HCT116 (cell line): ENCODE measurements at regions of chr2 and their contacts with region 1.

Region 1: GRCh38 chr2:56860991-56861390 is 677.2 kb downstream of the CCDC85A start:
- DNase-seq: no peak
- ATAC-seq: no peak
- H3K4me3 ChIP-seq: no peak overlapping the region
- H3K27ac ChIP-seq: no peak overlapping the region
- H3K4me1 ChIP-seq: no peaks in the 10 kb centered on the region
- H3K27me3 ChIP-seq: no peaks in the 10 kb centered on the region
- CTCF ChIP-seq: no peak
- POLR2A ChIP-seq: no peak
- RAD21 ChIP-seq: no peak

Region 2: DNA sequence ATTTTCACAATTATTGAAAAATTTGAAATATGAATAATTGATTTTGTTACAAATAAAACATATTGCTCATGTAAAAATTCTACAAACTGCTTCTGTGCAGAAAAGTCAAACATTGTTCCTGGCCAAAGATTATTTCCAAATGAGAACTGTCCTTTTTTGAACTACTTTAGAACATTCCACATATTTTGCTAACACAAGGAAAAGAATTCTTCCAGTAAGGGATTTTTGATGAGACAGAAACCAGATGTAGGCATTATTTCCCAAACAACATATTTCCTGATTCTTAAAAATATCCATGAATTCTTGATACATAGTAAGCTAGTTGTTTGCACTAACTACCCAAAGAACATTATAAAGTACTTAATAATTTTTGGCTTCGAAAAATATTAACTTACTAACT is 38.0 kb after region 1 on chr2:
- CTCF ChIA-PET with region 1: no interaction called
- POLR2A ChIA-PET with region 1: no interaction called
- RAD21 ChIA-PET with region 1: no interaction called
- intact Hi-C with region 1: loop called (anchors 2 kb)
- DNase-seq: no peak
- ATAC-seq: no peak
- H3K4me3 ChIP-seq: no peak overlapping the region
- H3K27ac ChIP-seq: no peak overlapping the region
- H3K4me1 ChIP-seq: no peaks in the 10 kb centered on the region
- H3K27me3 ChIP-seq: no peaks in the 10 kb centered on the region
- CTCF ChIP-seq: no peak
- POLR2A ChIP-seq: no peak
- RAD21 ChIP-seq: no peak